ENCODE measurements at regions of chr1 and their contacts with region 1.

Region 1: DNA sequence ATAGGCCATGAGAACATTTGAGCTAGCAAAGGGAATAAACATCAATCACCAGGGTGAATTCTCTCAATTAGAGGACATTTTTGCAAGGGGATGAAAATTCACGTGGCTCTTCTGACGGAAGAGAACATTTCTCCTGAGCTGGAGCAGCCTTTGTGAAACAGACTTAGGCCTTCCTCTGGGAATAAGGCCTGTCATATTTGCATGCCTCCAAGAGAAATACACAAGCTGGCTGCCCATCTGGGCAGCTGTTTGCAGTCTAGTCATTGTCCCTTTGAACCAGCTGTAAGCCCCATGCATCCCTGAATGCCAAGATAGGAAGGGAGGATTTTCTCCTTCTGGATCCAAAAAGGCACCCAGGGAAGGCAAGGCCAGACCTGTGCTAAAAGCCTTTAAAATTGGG is 5.5 kb downstream of the LEMD1 start:
- DNase-seq: peak in 1 of 2 donors; percentile 32
- H3K4me3 ChIP-seq: no peak overlapping the region
- CTCF ChIP-seq: no peak
- POLR2A ChIP-seq: no peak

Region 2: DNA sequence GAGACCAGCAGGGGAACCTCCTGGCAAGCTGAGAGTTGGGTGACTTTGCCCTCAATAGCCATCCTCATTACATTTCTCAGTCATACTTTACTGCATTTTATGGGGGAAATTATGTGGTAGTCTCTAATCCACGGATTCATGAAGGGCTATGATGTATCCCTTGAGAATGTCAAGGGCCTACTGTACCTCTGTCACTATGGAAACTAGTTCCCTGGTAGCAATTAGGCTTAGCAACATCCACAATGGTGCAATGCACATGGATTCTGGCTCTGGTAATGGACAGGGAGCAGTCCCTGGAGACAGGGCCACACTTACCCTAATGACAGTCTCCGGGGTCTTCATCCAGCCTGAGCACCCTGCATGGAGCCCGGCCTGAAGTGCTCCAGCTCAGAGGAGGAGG is 757.3 kb before region 1 on chr1:
- intact Hi-C with region 1: no loop called
- DNase-seq: no peak
- H3K4me3 ChIP-seq: no peak overlapping the region
- CTCF ChIP-seq: no peak
- POLR2A ChIP-seq: no peak

Region 3: DNA sequence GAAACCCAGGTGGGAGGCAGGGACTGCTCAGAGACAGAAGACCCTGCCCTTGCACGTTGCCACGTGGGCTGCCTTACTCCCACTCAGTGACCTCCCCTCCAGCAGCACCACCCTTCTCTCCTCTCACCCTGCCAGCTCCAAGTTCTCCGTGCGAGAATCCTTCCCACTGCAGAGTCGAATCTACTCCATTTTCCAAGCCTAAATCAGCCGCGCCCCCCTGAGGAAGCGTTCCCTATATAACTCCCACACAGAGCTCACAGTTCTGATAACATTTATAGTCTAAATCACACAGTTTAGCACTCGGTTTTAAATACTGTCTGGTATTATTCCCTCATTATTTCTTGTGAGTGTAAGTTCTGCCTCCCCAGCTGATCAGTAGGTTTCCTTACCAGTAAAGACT is 738.5 kb before region 1 on chr1:
- intact Hi-C with region 1: loop called (anchors 5 kb)
- DNase-seq: no peak
- H3K4me3 ChIP-seq: no peak overlapping the region
- CTCF ChIP-seq: no peak
- POLR2A ChIP-seq: no peak

Region 4: GRCh38 chr1:205271277-205271676 is 145.0 kb before region 1 on chr1:
- intact Hi-C with region 1: no loop called
- DNase-seq: no peak
- H3K4me3 ChIP-seq: no peak overlapping the region
- CTCF ChIP-seq: no peak
- POLR2A ChIP-seq: no peak

Region 5: GRCh38 chr1:205466595-205467181 is 50.4 kb after region 1 on chr1:
- intact Hi-C with region 1: loop called (anchors 10 kb)
- DNase-seq: no peak
- H3K4me3 ChIP-seq: no peak overlapping the region
- CTCF ChIP-seq: no peak
- POLR2A ChIP-seq: no peak